Activated CD4-positive, alpha-beta T cell treated with anti-CD3 and anti-CD28 coated beads, Interleukin-2, amount 10 ng/mL, durations not matched to agents 24 days and 14 days (primary cell): ENCODE measurements at regions of chr2 and their contacts with region 1.

Region 1: DNA sequence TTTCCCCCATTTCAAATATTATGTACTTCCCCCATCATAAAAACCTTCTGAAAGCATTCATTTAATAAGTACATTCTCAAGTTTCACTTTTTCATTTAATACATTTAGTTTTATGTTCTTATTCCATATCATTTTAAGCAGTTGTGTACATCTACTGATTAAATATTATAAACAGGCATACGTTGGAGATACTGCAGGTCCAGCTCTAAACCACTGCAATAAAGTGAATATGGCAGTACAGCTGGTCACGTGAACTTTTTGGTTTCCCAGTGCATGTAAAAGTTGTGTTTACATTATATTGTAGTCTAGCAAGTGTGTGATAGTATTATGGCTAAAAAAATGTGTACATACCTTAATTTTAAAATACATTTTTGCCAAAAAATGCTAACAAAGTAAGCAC is 48.7 kb downstream of the TET3 start:
- DNase-seq: no peak
- H3K4me3 Mint-ChIP-seq: peak overlapping the region; percentile 87
- H3K27ac Mint-ChIP-seq: peak overlapping the region; percentile 98
- H3K4me1 Mint-ChIP-seq: peaks cover 73% of the 10 kb centered on the region
- H3K27me3 Mint-ChIP-seq: no peaks in the 10 kb centered on the region

Region 2: DNA sequence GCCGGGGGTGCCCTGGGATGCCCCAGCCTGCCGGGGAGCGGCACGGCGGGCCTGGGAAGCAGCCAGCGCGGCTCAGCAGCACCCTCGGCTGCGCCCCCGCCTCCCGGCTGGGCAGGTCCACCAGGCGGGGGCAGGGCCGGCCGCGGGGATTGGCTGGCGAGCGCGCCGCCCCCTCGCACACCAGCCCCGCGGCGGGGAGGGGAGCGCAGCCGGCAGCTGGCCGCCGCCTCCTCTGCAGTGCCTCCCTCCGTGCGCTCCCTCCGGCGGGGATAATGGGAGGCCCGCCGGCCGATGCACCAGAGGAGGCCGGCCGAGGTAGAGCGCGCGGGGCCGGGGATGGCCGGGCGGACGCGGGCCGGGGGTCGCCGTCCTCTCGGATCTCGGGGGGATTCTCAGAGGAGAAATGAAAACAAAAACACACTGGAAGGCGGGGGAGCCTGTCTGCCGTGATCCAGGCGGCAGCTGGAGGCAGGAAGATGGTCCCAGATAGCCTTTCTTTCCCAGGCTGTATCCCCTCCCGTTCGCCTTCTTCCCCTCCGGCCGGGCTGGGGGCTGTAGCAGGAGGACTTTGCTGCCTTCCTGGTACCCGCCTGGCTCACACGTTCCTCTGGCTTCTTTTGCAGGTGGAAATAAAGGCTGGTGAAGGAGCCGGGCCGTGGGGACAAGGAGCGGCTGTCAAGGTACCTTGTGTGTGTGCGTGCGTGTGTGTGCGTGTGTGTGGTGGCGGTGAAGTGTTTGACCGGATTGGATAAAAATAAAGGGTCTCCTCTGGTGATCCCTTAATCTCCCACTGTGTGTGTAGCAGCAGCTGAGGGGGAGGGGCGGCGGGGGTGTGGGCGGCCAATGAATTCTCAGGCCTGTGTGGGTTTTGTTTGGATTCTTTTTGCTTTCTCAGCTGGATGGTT is 30.6 kb before region 1 on chr2:
- intact Hi-C with region 1: loop called (anchors 2 kb)
- DNase-seq: peak; percentile 95
- H3K4me3 Mint-ChIP-seq: peak overlapping the region; percentile 84
- H3K27ac Mint-ChIP-seq: peak overlapping the region; percentile 62
- H3K4me1 Mint-ChIP-seq: peaks cover 65% of the 10 kb centered on the region
- H3K27me3 Mint-ChIP-seq: no peaks in the 10 kb centered on the region